ENCODE measurements at regions of chr2 and their contacts with region 1.

Region 1: GRCh38 chr2:160387558-160388262 is 105.9 kb downstream of the RBMS1 start:
- DNase-seq: no peak
- H3K4me3 ChIP-seq: no peak overlapping the region
- H3K4me3 Mint-ChIP-seq: peak overlapping the region in 7 of 8 donors; percentile 66 to 89 (median 78)
- H3K27ac ChIP-seq: no peak overlapping the region
- H3K27ac Mint-ChIP-seq: peak overlapping the region; percentile 52 to 91 (median 67)
- H3K4me1 ChIP-seq: peaks cover 85% of the 10 kb centered on the region
- H3K4me1 Mint-ChIP-seq: peaks cover 62 to 95% (median 78%) of the 10 kb centered on the region in 4 donors
- H3K27me3 ChIP-seq: no peaks in the 10 kb centered on the region
- H3K27me3 Mint-ChIP-seq: no peaks in the 10 kb centered on the region

Region 2: GRCh38 chr2:160367887-160368286 is 19.8 kb before region 1 on chr2:
- CTCF ChIA-PET with region 1: no interaction called
- POLR2A ChIA-PET with region 1: no interaction called
- intact Hi-C with region 1: loop called (anchors 2 kb)
- DNase-seq: no peak
- H3K4me3 ChIP-seq: no peak overlapping the region
- H3K4me3 Mint-ChIP-seq: peak overlapping the region in 7 of 8 donors; percentile 23 to 82 (median 54)
- H3K27ac ChIP-seq: no peak overlapping the region
- H3K27ac Mint-ChIP-seq: peak overlapping the region in 6 of 7 donors; percentile 23 to 89 (median 63)
- H3K4me1 ChIP-seq: peaks cover 54% of the 10 kb centered on the region
- H3K4me1 Mint-ChIP-seq: peaks cover 62 to 93% (median 73%) of the 10 kb centered on the region in 4 donors
- H3K27me3 ChIP-seq: no peaks in the 10 kb centered on the region
- H3K27me3 Mint-ChIP-seq: no peaks in the 10 kb centered on the region

Region 3: DNA sequence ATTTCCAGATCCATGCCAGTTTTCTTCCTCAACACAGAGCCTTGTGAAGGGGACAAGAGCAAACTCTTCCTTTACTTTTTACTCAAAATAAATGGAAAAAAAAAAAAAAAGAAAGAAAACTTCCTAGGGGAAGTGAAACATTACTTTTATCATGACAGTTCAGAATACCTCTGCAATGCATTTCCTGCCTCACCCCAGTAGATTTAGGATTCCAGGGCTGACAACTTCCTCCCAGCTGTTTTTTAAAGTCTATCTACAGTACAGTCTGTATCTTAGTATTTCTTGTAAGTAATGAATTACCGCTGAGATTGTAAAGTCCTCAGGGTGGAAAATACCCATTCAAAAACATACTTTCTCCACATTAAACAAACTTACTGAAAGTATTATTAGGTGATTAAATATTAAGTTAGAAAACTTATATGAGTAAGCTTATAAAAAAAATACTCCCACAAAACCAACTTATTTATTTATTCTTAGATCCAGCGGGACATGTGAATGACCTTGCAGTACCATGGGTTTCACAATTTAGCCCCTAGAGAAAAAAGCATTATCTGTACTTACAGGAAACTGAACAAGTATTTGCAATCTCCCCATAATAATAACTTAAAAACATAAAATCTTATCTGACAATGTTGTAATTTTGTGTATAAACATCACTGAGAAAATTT is 11.8 kb before region 1 on chr2:
- CTCF ChIA-PET with region 1: interaction called, 4 read pairs
- POLR2A ChIA-PET with region 1: interaction called, 4 read pairs
- intact Hi-C with region 1: loop called (anchors 2 kb)
- DNase-seq: peak in 2 of 5 donors; percentile 10 to 14
- H3K4me3 ChIP-seq: no peak overlapping the region
- H3K4me3 Mint-ChIP-seq: peak overlapping the region in 5 of 8 donors; percentile 9 to 64 (median 26)
- H3K27ac ChIP-seq: no peak overlapping the region
- H3K27ac Mint-ChIP-seq: peak overlapping the region in 3 of 7 donors; percentile 10 to 13 (median 10)
- H3K4me1 ChIP-seq: peaks cover 86% of the 10 kb centered on the region
- H3K4me1 Mint-ChIP-seq: peaks cover 70 to 96% (median 86%) of the 10 kb centered on the region in 4 donors
- H3K27me3 ChIP-seq: no peaks in the 10 kb centered on the region
- H3K27me3 Mint-ChIP-seq: no peaks in the 10 kb centered on the region